ENCODE measurements at regions of chr1 and their contacts with region 1.

Region 1: DNA sequence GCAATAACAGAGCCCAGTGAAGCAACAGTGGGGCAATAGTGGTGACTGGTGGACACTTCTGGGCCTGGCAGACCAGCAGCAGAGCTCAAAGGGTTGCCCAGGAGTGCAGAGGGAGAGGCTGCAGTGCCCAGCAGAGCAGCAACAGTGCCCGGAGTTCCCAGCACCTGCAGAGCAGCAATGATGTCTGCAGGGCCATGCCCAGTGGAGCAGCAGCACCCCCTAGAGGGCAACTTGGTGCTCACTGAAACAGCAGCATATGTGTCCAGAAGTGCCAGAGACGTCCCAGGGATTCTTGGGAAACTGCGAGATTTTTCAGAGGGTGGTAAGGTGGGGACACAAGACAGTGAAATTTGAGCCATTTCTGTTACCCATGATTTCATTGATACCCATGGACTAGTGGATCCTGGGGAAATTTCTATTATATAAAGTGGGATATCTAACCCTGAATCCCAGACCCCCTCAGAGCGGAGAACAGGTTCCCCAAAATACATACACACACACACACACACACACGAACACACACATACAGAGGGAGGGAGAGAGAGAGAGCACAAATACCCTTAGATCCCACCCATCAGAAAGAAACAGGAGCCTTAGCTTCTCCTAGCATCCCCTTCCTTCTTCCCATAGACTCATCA is 156.9 kb upstream of the GJB5 start:
- DNase-seq: peak; percentile 53 to 94 (median 87)
- H3K4me3 ChIP-seq: no peak overlapping the region
- H3K27ac ChIP-seq: no peak overlapping the region
- H3K27me3 ChIP-seq: peaks cover 0 to 7% (median 0%) of the 10 kb centered on the region in 45 donors
- CTCF ChIP-seq: peak; percentile 53 to 93 (median 87)

Region 2: GRCh38 chr1:33633019-33633801 is 964.8 kb before region 1 on chr1:
- intact Hi-C with region 1: loop called (anchors 2 to 5 kb)
- DNase-seq: peak; percentile 82 to 96 (median 93)
- H3K4me3 ChIP-seq: peak overlapping the region in 5 of 59 donors; percentile 2 to 44 (median 19)
- H3K27ac ChIP-seq: peak overlapping the region in 4 of 59 donors; percentile 35 to 57 (median 46)
- H3K27me3 ChIP-seq: no peaks in the 10 kb centered on the region
- CTCF ChIP-seq: peak; percentile 93 to 100 (median 98)

Region 3: GRCh38 chr1:34406833-34407539 is 191.0 kb before region 1 on chr1:
- intact Hi-C with region 1: no loop called
- DNase-seq: no peak
- H3K4me3 ChIP-seq: no peak overlapping the region
- H3K27ac ChIP-seq: no peak overlapping the region
- H3K27me3 ChIP-seq: no peaks in the 10 kb centered on the region
- CTCF ChIP-seq: no peak

Region 4: GRCh38 chr1:34642679-34643078 is 44.7 kb after region 1 on chr1:
- intact Hi-C with region 1: no loop called
- DNase-seq: no peak
- H3K4me3 ChIP-seq: no peak overlapping the region
- H3K27ac ChIP-seq: no peak overlapping the region
- H3K27me3 ChIP-seq: peaks cover 0 to 18% (median 3%) of the 10 kb centered on the region in 45 donors
- CTCF ChIP-seq: no peak

Region 5: DNA sequence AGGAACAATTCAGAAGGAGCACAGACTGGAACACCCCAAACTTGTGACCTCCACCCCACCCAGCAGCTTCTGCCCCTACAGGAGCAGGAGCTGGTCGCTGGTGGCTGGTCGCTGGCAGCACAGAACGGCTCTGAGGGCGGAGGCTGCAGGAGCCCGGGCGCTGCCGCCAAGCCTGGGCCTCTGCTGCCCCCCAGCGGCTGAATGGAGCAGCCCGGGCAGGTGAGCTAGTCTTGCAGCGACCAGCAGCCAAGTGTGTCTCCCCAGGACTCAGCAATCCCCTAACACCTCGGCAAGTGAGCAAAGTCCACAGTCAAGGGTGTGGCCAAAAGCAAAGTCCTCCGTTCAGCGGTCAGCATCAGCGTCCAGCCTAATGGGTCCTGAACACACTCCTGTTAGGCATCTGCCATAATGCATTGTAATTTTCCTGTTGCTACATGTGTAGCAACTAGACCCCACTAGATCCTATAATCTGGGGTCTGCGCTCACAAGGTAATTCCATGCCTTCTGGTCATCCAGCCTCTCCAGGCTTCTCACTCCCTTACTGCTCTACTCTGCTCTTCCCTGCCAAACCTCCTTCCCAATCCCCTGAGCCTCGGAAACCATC is 144.8 kb after region 1 on chr1:
- intact Hi-C with region 1: no loop called
- DNase-seq: peak; percentile 67 to 90 (median 79)
- H3K4me3 ChIP-seq: no peak overlapping the region
- H3K27ac ChIP-seq: peak overlapping the region in 1 of 59 donors; percentile 44
- H3K27me3 ChIP-seq: no peaks in the 10 kb centered on the region
- CTCF ChIP-seq: peak; percentile 39 to 97 (median 92)